OCI-LY7 (cell line): ENCODE measurements at regions of chr3 and their contacts with region 1.

Region 1: DNA sequence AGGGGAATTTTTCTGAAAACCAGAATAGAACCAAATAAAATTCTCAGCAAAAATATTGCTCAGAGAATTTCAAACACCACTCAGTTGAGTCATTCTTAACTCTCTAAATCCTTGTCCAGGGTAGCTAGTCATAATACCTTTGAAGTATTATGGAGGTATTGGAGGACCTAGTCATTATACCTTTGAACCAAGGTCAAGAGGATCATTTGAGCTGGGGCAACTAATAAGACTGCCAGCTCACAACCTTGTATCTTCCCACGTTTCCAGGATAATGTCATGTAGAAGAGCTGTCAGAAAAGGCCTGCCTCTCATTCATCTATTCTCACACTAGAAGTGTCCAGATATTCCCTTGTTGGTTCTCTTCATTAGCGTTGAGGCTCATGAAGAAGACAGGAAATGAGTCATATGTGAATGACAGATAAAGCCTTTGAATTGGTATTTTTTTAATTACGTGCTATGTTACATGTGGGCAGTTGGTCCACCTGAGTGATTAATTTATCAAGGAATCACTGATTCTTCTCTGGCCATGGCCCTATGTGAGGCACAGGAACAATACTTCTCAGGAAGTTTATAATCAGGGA is 48.3 kb downstream of the TOPAZ1 start:
- DNase-seq: no peak
- H3K4me3 ChIP-seq: no peak overlapping the region
- H3K27ac ChIP-seq: no peak overlapping the region
- H3K4me1 ChIP-seq: no peaks in the 10 kb centered on the region
- CTCF ChIP-seq: no peak

Region 2: GRCh38 chr3:44272191-44272590 is 17.8 kb before region 1 on chr3:
- CTCF ChIA-PET with region 1: no interaction called
- POLR2A ChIA-PET with region 1: no interaction called
- intact Hi-C with region 1: no loop called
- DNase-seq: no peak
- H3K4me3 ChIP-seq: no peak overlapping the region
- H3K27ac ChIP-seq: no peak overlapping the region
- H3K4me1 ChIP-seq: no peaks in the 10 kb centered on the region
- CTCF ChIP-seq: no peak

Region 3: GRCh38 chr3:44309500-44309899 is 19.5 kb after region 1 on chr3:
- CTCF ChIA-PET with region 1: no interaction called
- POLR2A ChIA-PET with region 1: interaction called, 10 read pairs
- intact Hi-C with region 1: no loop called
- DNase-seq: no peak
- H3K4me3 ChIP-seq: no peak overlapping the region
- H3K27ac ChIP-seq: no peak overlapping the region
- H3K4me1 ChIP-seq: no peaks in the 10 kb centered on the region
- CTCF ChIP-seq: no peak

Region 4: GRCh38 chr3:44338010-44338827 is 48.2 kb after region 1 on chr3 and contains the start of gene TCAIM:
- CTCF ChIA-PET with region 1: no interaction called
- POLR2A ChIA-PET with region 1: no interaction called
- intact Hi-C with region 1: no loop called
- DNase-seq: peak; percentile 98
- H3K4me3 ChIP-seq: peak within 1 kb of the TSS; percentile 82
- H3K27ac ChIP-seq: peak within 1 kb of the TSS; percentile 71
- H3K4me1 ChIP-seq: peaks cover 23% of the 10 kb centered on the region
- CTCF ChIP-seq: no peak
- total RNA-seq, gene TCAIM: 15.2 and 17.9 TPM in 2 replicates